ENCODE measurements at regions of chr6 and their contacts with region 1.

Region 1: DNA sequence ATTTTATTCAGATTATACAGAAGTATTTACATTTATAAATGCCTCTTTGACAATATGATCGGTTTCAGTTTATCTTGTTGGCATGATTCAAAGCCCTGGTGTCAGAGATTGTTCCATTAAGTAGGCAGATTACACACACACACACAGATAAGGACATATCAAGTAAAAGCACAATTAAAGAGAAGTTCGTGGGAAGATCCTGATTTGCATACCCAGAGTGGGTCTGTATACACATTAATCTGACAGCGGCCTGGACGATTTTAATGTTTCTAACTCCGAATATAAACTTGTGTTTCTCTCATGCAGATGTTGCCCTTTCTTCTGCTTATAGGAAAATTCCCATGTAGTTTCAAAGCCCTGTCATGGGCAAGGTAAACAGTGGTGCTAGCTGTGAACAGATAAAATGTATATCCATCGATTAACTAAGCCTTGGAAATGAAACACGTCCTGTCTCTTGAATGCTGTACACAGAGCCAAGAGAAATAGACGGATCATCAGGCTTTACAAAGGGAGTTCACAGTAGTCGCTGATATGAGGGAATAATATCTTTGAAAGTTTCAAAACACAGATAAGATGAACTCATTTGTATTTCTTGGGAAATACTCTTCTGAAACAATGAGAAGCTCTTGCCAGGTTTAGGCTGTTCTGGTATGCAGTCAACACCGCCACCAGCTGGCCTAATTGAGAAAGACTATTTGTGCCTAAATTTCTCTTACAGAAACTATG is 108.2 kb upstream of the GMDS start:
- DNase-seq: peak; percentile 92
- H3K4me3 ChIP-seq: peak overlapping the region in 1 of 3 experiments; percentile 6
- H3K27ac ChIP-seq: no peak overlapping the region
- H3K4me1 ChIP-seq: peaks cover 6% of the 10 kb centered on the region
- H3K27me3 ChIP-seq: no peaks in the 10 kb centered on the region
- CTCF ChIP-seq: peak; percentile 64 to 66
- POLR2A ChIP-seq: no peak

Region 2: DNA sequence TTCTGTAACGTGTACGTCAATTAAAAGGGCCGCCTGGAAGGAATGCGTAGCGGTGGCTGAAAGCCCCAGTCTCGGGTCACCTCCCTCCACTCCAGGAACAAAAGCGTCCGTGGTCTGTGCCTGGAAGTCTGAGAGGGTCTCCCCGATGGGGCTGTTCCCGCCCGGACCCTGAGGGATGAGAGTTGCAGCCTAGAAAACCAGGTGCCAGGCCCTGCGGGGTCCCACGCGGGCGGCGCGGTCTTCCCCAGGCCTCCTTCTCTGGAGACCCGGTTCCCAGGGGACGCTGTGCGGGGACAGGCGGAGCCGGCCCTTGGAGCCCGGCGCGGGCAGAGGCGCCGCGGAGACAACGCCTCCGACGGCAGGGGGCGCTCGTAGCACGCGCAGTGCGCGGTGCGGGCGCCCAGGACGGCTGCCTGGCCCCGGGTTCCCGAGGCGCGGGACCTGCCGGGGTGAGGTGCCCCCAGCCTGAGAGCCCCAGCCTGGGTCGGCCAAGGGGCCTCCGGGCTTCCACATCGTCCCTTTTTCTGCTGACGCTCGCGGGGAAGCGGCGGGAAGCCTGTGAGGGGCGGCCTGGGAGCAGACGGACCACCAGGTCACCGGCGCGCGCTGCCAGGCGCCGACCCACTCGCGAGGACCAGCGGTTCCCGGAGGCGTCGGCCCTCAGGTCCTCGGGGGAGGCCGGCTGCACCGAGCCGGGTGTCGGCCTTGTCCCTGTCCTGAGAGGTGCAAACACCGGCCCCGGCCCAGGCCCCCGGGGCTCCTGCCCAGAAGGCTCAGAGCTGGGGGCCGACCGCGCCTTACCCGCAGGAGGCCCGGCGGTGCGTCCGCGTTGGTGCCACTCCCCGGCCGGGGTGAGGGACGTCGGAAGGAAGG is 749.2 kb before region 1 on chr6:
- CTCF ChIA-PET with region 1: interaction called, 90 read pairs
- POLR2A ChIA-PET with region 1: no interaction called
- dilution Hi-C with region 1: no loop called
- intact Hi-C with region 1: loop called (anchors 1 kb)
- DNase-seq: peak; percentile 63
- H3K4me3 ChIP-seq: peak overlapping the region; percentile 33 to 38 (median 36)
- H3K27ac ChIP-seq: no peak overlapping the region
- H3K4me1 ChIP-seq: peaks cover 3% of the 10 kb centered on the region
- H3K27me3 ChIP-seq: peaks cover 12 to 16% of the 10 kb centered on the region in 2 experiments
- CTCF ChIP-seq: peak; percentile 87 to 91
- POLR2A ChIP-seq: no peak

Region 3: GRCh38 chr6:1787894-1788293 is 565.7 kb before region 1 on chr6:
- CTCF ChIA-PET with region 1: interaction called, 3 read pairs
- POLR2A ChIA-PET with region 1: no interaction called
- dilution Hi-C with region 1: no loop called
- intact Hi-C with region 1: loop called (anchors 10 kb)
- DNase-seq: peak; percentile 92
- H3K4me3 ChIP-seq: no peak overlapping the region
- H3K27ac ChIP-seq: peak overlapping the region; percentile 84
- H3K4me1 ChIP-seq: peaks cover 45% of the 10 kb centered on the region
- H3K27me3 ChIP-seq: no peaks in the 10 kb centered on the region
- CTCF ChIP-seq: no peak
- POLR2A ChIP-seq: no peak

Region 4: DNA sequence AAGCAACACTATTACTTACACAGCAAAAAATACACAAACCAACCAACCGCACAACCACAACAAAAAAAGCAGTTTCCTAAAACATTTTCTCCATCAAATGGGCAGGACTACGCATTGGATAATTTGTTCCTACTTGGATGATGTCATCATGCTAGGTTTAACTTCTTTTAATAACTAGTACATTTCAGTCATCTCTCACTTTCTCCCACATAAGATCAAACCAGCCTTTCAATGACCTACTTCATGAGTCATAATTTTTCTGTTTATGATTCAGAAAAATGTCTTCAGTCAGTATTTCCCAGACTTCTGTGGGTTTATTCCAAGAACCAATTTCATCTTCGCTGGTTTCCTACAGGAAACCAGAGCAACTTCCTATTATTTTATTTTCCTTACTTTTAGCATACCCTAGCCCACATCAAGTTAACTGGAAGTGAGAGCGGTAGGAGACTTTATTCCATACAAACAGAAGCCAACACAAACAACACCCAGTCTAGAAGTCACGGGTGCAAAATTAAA is 242.4 kb before region 1 on chr6:
- CTCF ChIA-PET with region 1: interaction called, 16 read pairs
- POLR2A ChIA-PET with region 1: interaction called, 3 read pairs
- dilution Hi-C with region 1: no loop called
- intact Hi-C with region 1: no loop called
- DNase-seq: peak; percentile 97
- H3K4me3 ChIP-seq: peak overlapping the region in 1 of 3 experiments; percentile 51
- H3K27ac ChIP-seq: peak overlapping the region; percentile 76
- H3K4me1 ChIP-seq: peaks cover 40% of the 10 kb centered on the region
- H3K27me3 ChIP-seq: no peaks in the 10 kb centered on the region
- CTCF ChIP-seq: no peak
- POLR2A ChIP-seq: no peak

Region 5: DNA sequence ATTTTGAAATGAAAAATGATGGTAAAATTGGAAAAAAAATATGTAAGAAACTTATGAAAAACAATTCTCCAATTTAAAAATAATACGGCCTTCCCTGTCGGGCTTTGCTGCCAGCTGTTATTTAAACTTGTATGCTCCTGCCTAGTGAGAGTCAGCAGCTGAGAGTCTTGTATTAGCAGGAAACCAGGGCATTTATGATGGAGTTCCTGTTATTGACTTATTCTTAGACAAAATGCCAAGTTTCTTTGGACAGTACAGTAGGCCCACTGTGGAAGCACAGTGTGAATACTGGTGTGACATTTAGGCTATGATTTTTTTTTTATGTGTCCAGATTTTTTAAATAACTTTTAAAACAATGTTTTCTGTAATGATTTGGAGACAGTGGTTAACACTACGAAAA is 150.3 kb before region 1 on chr6:
- CTCF ChIA-PET with region 1: interaction called, 79 read pairs
- POLR2A ChIA-PET with region 1: no interaction called
- dilution Hi-C with region 1: no loop called
- intact Hi-C with region 1: no loop called
- DNase-seq: peak; percentile 94
- H3K4me3 ChIP-seq: no peak overlapping the region
- H3K27ac ChIP-seq: peak overlapping the region; percentile 72
- H3K4me1 ChIP-seq: peaks cover 17% of the 10 kb centered on the region
- H3K27me3 ChIP-seq: no peaks in the 10 kb centered on the region
- CTCF ChIP-seq: no peak
- POLR2A ChIP-seq: no peak

Region 6: DNA sequence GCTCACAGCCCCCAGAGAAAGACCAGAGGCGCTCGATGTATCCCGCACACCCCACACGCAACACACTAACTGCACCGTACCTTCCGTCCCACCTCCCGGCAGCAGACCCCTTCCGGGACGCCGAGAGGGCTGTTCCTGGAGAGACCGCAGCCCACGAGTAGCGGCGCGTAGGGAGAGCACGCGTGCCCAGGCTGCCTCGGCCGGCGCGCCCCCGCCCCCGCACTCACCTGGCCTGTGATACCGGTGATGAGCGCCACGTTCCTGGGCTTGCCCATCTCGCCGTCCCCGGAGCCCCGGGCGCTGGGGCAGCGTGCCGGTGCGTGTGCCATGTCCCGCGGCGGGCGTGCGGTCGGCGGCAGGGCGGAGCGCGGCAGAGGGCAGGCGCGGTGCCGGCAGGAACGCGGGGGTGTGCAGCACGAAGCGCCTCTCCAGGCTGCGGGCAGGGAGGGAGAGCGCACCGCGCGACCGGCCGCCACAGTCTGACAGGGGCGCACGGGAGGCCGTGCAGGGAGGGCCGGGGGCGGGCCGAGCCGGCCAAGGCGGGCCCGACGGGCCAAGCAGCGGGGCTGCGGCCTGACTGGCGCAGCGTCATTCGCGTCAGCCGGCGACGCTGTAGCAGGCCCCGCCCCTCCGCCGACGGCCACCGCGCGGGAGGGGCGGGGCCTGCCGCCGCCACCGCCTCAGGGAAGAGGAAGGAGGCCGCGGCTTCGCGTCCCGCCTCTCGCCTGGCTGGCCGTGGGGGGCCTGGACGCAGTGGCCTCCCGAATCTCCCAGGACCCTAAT is 108.3 kb before region 1 on chr6 and contains the start of gene GMDS:
- CTCF ChIA-PET with region 1: interaction called, 5 read pairs
- POLR2A ChIA-PET with region 1: no interaction called
- dilution Hi-C with region 1: no loop called
- intact Hi-C with region 1: loop called (anchors 1 kb)
- DNase-seq: peak; percentile 90
- H3K4me3 ChIP-seq: peak within 1 kb of the TSS; percentile 23 to 91 (median 70)
- H3K27ac ChIP-seq: peak within 1 kb of the TSS; percentile 67
- H3K4me1 ChIP-seq: peaks cover 10% of the 10 kb centered on the region
- H3K27me3 ChIP-seq: no peaks in the 10 kb centered on the region
- CTCF ChIP-seq: no peak
- POLR2A ChIP-seq: peak; percentile 87
- total RNA-seq, gene GMDS: 23.5 TPM in 2 replicates

Region 7: DNA sequence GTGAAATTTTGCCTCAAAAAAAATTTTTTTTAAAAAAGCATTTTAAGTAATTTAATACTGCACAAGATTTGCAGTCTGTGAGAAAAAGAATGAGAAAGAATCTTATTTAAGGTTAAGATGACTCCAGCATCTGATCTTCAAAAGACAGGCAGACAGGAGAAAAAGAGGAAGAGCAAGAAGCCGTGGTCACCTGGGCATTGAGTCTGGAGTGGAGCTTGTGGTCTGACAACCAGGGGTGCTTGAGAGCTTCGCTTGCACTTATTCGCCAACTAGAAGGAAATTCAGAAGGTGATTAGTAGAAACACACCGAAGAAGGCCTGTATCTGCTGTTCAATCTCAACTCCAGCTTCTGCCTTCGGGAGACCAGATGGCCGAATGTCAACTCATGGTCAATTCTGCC is 321.3 kb after region 1 on chr6:
- CTCF ChIA-PET with region 1: no interaction called
- POLR2A ChIA-PET with region 1: no interaction called
- dilution Hi-C with region 1: no loop called
- intact Hi-C with region 1: no loop called
- DNase-seq: no peak
- H3K4me3 ChIP-seq: no peak overlapping the region
- H3K27ac ChIP-seq: no peak overlapping the region
- H3K4me1 ChIP-seq: no peaks in the 10 kb centered on the region
- H3K27me3 ChIP-seq: no peaks in the 10 kb centered on the region
- CTCF ChIP-seq: no peak
- POLR2A ChIP-seq: no peak

Region 8: GRCh38 chr6:2688416-2689064 is 335.0 kb after region 1 on chr6:
- CTCF ChIA-PET with region 1: no interaction called
- POLR2A ChIA-PET with region 1: no interaction called
- dilution Hi-C with region 1: no loop called
- intact Hi-C with region 1: no loop called
- DNase-seq: peak; percentile 24
- H3K4me3 ChIP-seq: no peak overlapping the region
- H3K27ac ChIP-seq: no peak overlapping the region
- H3K4me1 ChIP-seq: no peaks in the 10 kb centered on the region
- H3K27me3 ChIP-seq: no peaks in the 10 kb centered on the region
- CTCF ChIP-seq: no peak
- POLR2A ChIP-seq: no peak

Measured in endothelial cell of umbilical vein (primary cell).